Activated CD4-positive, alpha-beta memory T cell treated with anti-CD3 and anti-CD28 coated beads for 36 hours (primary cell): ENCODE measurements at regions of chr4 and their contacts with region 1.

Region 1: DNA sequence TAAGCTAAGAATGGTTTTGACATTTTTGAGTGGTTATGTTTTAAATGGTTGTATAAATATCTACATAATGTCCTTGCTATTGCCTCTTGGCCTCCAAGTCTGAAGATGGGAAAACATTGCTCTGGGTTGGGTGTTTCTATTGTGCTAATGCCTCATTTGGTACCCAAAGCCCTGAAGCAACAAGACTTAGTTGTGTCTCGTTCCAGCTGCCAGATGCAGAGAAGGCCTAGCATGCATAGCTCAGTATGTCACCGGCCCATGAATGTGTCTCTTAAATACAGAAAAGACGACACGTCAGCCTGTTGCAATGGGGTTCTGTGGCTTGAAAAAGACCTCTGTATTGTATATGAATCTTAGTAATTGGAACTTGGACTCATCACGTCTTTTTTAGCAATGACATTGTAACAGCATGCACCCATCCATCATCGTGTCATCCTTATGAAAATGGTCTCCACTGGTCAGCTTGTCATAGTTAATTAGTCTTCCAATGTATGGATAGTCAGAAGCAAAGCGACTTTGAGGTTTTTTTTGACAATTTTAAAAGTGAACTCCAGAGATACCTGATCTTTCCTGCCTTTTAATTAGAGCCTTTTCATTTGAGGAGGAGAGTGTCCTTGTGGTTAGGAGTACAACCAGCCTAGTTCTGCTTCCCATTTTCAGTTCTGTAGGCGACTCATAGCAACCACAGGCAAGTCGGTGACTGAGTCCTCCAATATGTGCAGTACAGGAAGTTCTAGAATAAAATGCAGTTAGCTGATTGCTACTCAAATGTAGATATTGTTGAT is 126.4 kb upstream of the GATB start:
- DNase-seq: peak; percentile 15
- H3K4me3 Mint-ChIP-seq: no peak overlapping the region
- H3K27ac Mint-ChIP-seq: no peak overlapping the region
- H3K4me1 Mint-ChIP-seq: peaks cover 16% of the 10 kb centered on the region
- H3K27me3 Mint-ChIP-seq: no peaks in the 10 kb centered on the region

Region 2: DNA sequence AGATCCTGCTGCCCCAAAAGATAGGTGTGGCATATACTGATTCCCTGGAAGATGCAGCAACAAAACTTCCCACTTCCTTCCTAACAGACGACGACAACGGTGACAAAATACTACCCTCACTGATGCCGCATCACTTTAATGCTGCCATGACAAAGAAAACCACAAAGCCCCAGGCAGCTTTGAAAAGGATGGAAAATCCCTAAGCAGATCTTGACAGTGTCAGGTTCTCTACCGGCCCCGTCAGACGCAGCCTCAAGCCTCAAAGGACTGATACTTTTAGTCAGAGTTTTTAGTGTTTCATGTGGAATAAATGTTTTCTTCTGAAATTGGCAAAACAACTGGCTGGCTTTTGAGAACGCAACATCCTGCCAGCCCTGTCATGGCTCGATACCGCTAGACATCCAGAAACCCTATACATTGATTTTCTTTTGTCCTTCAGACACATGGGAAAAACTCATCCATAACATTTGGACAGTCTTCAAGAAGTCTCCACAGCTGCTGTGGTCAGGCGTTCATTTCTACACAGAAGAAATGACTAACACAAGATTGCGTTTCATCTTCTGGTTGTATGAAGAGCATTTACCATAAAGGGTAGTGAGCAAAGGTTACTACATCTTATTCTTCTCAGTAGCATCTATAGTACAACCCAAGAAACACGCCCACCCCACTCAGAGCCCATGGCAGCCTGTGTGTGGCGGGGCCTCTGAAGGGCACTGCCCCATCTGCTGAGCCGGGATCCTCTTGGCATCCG is 186.5 kb before region 1 on chr4:
- CTCF ChIA-PET with region 1: no interaction called
- POLR2A ChIA-PET with region 1: no interaction called
- intact Hi-C with region 1: loop called (anchors 10 kb)
- DNase-seq: peak; percentile 63
- H3K4me3 Mint-ChIP-seq: no peak overlapping the region
- H3K27ac Mint-ChIP-seq: peak overlapping the region; percentile 75
- H3K4me1 Mint-ChIP-seq: peaks cover 8% of the 10 kb centered on the region
- H3K27me3 Mint-ChIP-seq: no peaks in the 10 kb centered on the region

Region 3: DNA sequence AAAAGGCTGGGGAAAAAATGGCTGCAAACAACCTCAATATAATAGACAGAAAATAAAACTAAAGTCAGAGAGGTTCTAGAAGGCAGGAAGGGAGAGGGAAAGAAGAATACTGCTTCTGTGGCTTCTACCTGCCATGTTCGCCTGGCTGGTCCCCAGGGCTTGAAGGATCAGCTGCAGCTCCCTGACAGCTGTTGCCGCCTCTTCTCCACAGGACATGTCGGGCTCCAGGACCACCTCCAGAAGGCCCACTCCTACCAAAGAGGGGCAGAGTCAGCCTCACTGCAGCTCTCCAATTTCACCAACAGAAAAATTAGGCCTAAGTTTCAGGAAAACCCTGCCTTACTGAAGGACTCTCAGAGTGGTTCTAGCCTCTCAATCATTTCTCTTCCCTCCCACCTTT is 171.3 kb before region 1 on chr4:
- CTCF ChIA-PET with region 1: no interaction called
- POLR2A ChIA-PET with region 1: no interaction called
- intact Hi-C with region 1: no loop called
- DNase-seq: no peak
- H3K4me3 Mint-ChIP-seq: no peak overlapping the region
- H3K27ac Mint-ChIP-seq: no peak overlapping the region
- H3K4me1 Mint-ChIP-seq: no peaks in the 10 kb centered on the region
- H3K27me3 Mint-ChIP-seq: no peaks in the 10 kb centered on the region

Region 4: GRCh38 chr4:151760712-151761527 is 126.3 kb before region 1 on chr4 and contains the start of gene GATB:
- CTCF ChIA-PET with region 1: no interaction called
- POLR2A ChIA-PET with region 1: no interaction called
- intact Hi-C with region 1: loop called (anchors 5 kb)
- DNase-seq: peak; percentile 95
- H3K4me3 Mint-ChIP-seq: peak within 1 kb of the TSS; percentile 91
- H3K27ac Mint-ChIP-seq: peak within 1 kb of the TSS; percentile 64
- H3K4me1 Mint-ChIP-seq: peaks cover 13% of the 10 kb centered on the region
- H3K27me3 Mint-ChIP-seq: no peaks in the 10 kb centered on the region
- total RNA-seq, gene GATB: 16.1 to 16.5 TPM

Region 5: DNA sequence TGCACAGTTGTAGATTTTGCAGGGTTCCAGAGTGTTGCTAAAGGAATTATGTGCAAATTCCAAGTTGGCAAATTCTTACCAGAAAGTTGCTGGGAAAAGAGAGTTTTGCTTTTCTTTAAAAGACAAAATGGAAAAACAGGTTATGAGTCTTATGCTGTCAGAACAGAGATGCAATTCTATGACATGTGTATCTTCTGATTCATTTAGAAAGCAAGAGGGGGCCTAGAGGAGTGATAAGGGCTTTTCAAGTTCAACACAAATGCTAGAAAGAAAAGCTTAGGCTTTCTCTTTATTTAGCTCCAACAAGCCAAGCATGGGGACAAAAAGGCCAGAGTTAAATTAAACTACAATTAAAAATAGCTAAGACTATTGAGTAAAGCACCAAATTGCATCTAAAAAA is 54.0 kb before region 1 on chr4:
- CTCF ChIA-PET with region 1: no interaction called
- POLR2A ChIA-PET with region 1: no interaction called
- intact Hi-C with region 1: loop called (anchors 1 kb)
- DNase-seq: no peak
- H3K4me3 Mint-ChIP-seq: no peak overlapping the region
- H3K27ac Mint-ChIP-seq: no peak overlapping the region
- H3K4me1 Mint-ChIP-seq: peaks cover 3% of the 10 kb centered on the region
- H3K27me3 Mint-ChIP-seq: no peaks in the 10 kb centered on the region

Region 6: GRCh38 chr4:152100379-152101201 is 213.4 kb after region 1 on chr4:
- CTCF ChIA-PET with region 1: no interaction called
- POLR2A ChIA-PET with region 1: no interaction called
- intact Hi-C with region 1: loop called (anchors 1 kb)
- DNase-seq: peak; percentile 89
- H3K4me3 Mint-ChIP-seq: peak overlapping the region; percentile 72
- H3K27ac Mint-ChIP-seq: peak overlapping the region; percentile 97
- H3K4me1 Mint-ChIP-seq: peaks cover 88% of the 10 kb centered on the region
- H3K27me3 Mint-ChIP-seq: no peaks in the 10 kb centered on the region

Region 7: DNA sequence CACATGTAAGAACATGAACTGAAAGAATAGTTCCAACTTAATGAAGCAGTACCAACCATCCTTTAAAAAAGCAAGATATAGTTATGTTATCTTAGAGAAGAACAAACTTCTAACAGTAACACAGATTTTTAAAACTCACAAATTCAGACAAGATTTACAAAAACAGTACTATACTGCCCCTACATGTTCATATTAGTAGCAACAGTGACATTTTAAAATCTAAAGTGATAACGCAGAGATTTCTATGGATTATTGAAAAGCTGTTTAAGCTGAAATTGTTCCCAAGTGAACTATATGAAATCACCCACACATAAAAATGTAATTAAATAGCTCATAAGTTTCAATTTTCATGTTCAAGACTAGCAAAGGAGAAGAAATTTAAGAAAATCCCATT is 482.7 kb after region 1 on chr4:
- CTCF ChIA-PET with region 1: no interaction called
- POLR2A ChIA-PET with region 1: no interaction called
- intact Hi-C with region 1: loop called (anchors 10 kb)
- DNase-seq: no peak
- H3K4me3 Mint-ChIP-seq: no peak overlapping the region
- H3K27ac Mint-ChIP-seq: no peak overlapping the region
- H3K4me1 Mint-ChIP-seq: peaks cover 29% of the 10 kb centered on the region
- H3K27me3 Mint-ChIP-seq: no peaks in the 10 kb centered on the region

Region 8: GRCh38 chr4:152779513-152780266 is 892.5 kb after region 1 on chr4 and contains the starts of genes ARFIP1 and TIGD4:
- CTCF ChIA-PET with region 1: no interaction called
- POLR2A ChIA-PET with region 1: no interaction called
- intact Hi-C with region 1: loop called (anchors 5 kb)
- DNase-seq: peak; percentile 98
- H3K4me3 Mint-ChIP-seq: peak within 1 kb of the TSS; percentile 95
- H3K27ac Mint-ChIP-seq: peak within 1 kb of the TSS; percentile 85
- H3K4me1 Mint-ChIP-seq: peaks cover 34% of the 10 kb centered on the region
- H3K27me3 Mint-ChIP-seq: peaks cover 3% of the 10 kb centered on the region
- total RNA-seq, gene ARFIP1: 9.3 to 10.5 TPM
- total RNA-seq, gene TIGD4: 0.15 to 0.31 TPM